ENCODE measurements at regions of chr1 and their contacts with region 1.

Region 1: GRCh38 chr1:61453111-61453961 is 271.6 kb downstream of the TM2D1 start:
- DNase-seq: peak; percentile 67 to 90 (median 80)
- H3K4me3 ChIP-seq: peak overlapping the region in 11 of 59 donors; percentile 6 to 29 (median 13)
- H3K27ac ChIP-seq: peak overlapping the region in 58 of 59 donors; percentile 0 to 83 (median 68)
- H3K27me3 ChIP-seq: no peaks in the 10 kb centered on the region
- CTCF ChIP-seq: peak; percentile 23 to 87 (median 76)

Region 2: GRCh38 chr1:61352845-61353435 is 100.4 kb before region 1 on chr1:
- intact Hi-C with region 1: loop called in 1 of 2 experiments (anchors 5 kb)
- DNase-seq: no peak
- H3K4me3 ChIP-seq: no peak overlapping the region
- H3K27ac ChIP-seq: no peak overlapping the region
- H3K27me3 ChIP-seq: no peaks in the 10 kb centered on the region
- CTCF ChIP-seq: no peak

Region 3: DNA sequence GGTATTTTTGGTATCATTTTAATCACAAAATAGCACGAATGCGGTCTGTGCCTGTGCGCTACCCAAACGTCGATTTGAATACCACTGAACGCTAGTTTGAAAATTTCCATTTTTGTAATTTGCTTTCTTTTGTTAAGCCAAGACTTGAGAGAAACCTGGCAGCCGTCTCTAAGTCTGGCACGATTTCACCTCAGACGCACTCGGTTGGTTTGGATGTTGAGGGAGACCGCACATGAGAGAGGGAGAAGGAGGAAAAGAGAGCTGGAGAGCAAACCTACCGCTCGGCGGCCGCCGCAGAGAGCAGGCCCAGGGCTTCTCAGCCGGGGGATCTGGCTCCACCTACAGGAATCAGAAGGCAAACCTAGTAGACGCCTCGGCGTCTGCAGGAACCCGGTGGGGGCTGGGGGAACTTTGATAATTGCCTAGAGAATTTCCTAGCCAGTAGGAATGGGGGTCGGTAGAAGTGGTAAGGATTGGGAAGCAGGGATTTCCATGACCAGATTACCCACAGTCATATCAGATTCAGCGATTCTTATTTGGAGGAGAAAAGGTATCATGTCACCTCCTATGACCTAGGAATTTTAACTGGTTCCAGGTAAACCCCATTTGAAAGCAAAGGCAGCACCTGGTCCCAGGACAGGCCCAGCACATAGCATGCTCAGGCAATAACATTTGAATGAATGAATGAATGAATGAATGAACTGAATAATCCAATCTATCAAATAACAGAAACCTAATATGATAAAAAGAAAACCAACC is 188.4 kb after region 1 on chr1:
- intact Hi-C with region 1: loop called in 1 of 2 experiments (anchors 2 kb)
- DNase-seq: peak; percentile 54 to 84 (median 72)
- H3K4me3 ChIP-seq: peak overlapping the region in 50 of 59 donors; percentile 1 to 55 (median 32)
- H3K27ac ChIP-seq: peak overlapping the region in 42 of 59 donors; percentile 3 to 81 (median 51)
- H3K27me3 ChIP-seq: no peaks in the 10 kb centered on the region
- CTCF ChIP-seq: peak; percentile 39 to 87 (median 76)

Measured in dorsolateral prefrontal cortex (tissue), 120 donors.